ENCODE measurements at regions of chr5 and their contacts with region 1.

Region 1: GRCh38 chr5:150846654-150847333 is 473 bp downstream of the IRGM start:
- DNase-seq: no peak
- ATAC-seq: peak; percentile 84

Region 2: GRCh38 chr5:150700594-150701293 is 146.1 kb before region 1 on chr5 and contains the start of gene RBM22:
- intact Hi-C with region 1: loop called (anchors 5 kb)
- DNase-seq: peak; percentile 97
- ATAC-seq: peak; percentile 99
- total RNA-seq, gene RBM22: 30.5 TPM

Region 3: GRCh38 chr5:150778517-150779396 is 68.0 kb before region 1 on chr5 and contains the start of gene SMIM3:
- intact Hi-C with region 1: no loop called
- DNase-seq: peak; percentile 93
- ATAC-seq: peak; percentile 83
- total RNA-seq, gene SMIM3: 19.8 TPM

Region 4: GRCh38 chr5:150801117-150801927 is 45.5 kb before region 1 on chr5:
- intact Hi-C with region 1: loop called (anchors 5 kb)
- DNase-seq: no peak
- ATAC-seq: peak; percentile 80

Region 5: GRCh38 chr5:151675611-151676313 is 829.0 kb after region 1 on chr5:
- intact Hi-C with region 1: no loop called
- DNase-seq: no peak
- ATAC-seq: no peak